ENCODE measurements at regions of chr10 and their contacts with region 1.

Region 1: GRCh38 chr10:24811881-24812622 is 88.4 kb upstream of the ARHGAP21 start:
- DNase-seq: no peak
- ATAC-seq: no peak
- H3K4me3 ChIP-seq: no peak overlapping the region
- H3K27ac ChIP-seq: no peak overlapping the region
- H3K4me1 ChIP-seq: no peaks in the 10 kb centered on the region
- H3K27me3 ChIP-seq: no peaks in the 10 kb centered on the region
- CTCF ChIP-seq: no peak
- POLR2A ChIP-seq: no peak
- RAD21 ChIP-seq: no peak

Region 2: GRCh38 chr10:24800861-24801260 is 11.2 kb before region 1 on chr10:
- CTCF ChIA-PET with region 1: interaction called, 11 read pairs
- POLR2A ChIA-PET with region 1: no interaction called
- dilution Hi-C with region 1: no loop called
- in situ Hi-C with region 1: no loop called
- intact Hi-C with region 1: no loop called
- DNase-seq: no peak
- ATAC-seq: no peak
- H3K4me3 ChIP-seq: no peak overlapping the region
- H3K27ac ChIP-seq: no peak overlapping the region
- H3K4me1 ChIP-seq: no peaks in the 10 kb centered on the region
- H3K27me3 ChIP-seq: no peaks in the 10 kb centered on the region; the same call in 1 of the 2 replicates
- CTCF ChIP-seq: no peak
- POLR2A ChIP-seq: no peak
- RAD21 ChIP-seq: no peak

Measured in IMR-90 (cell line).